ENCODE measurements at regions of chr13 and their contacts with region 1.

Region 1: GRCh38 chr13:104198801-104199200 is 1132.6 kb upstream of the SLC10A2 start:
- DNase-seq: no peak
- ATAC-seq: no peak
- H3K4me3 ChIP-seq: no peak overlapping the region
- H3K27ac ChIP-seq: no peak overlapping the region
- H3K4me1 ChIP-seq: no peaks in the 10 kb centered on the region
- H3K27me3 ChIP-seq: no peaks in the 10 kb centered on the region
- CTCF ChIP-seq: no peak
- POLR2A ChIP-seq: no peak

Region 2: GRCh38 chr13:104132849-104133248 is 66.0 kb before region 1 on chr13:
- intact Hi-C with region 1: no loop called
- DNase-seq: no peak
- ATAC-seq: no peak
- H3K4me3 ChIP-seq: no peak overlapping the region
- H3K27ac ChIP-seq: no peak overlapping the region
- H3K4me1 ChIP-seq: no peaks in the 10 kb centered on the region
- H3K27me3 ChIP-seq: no peaks in the 10 kb centered on the region
- CTCF ChIP-seq: no peak
- POLR2A ChIP-seq: no peak

Region 3: GRCh38 chr13:104143760-104144416 is 54.9 kb before region 1 on chr13:
- intact Hi-C with region 1: loop called in 1 of 10 experiments (anchors 5 kb)
- DNase-seq: no peak
- ATAC-seq: no peak
- H3K4me3 ChIP-seq: no peak overlapping the region
- H3K27ac ChIP-seq: no peak overlapping the region
- H3K4me1 ChIP-seq: no peaks in the 10 kb centered on the region
- H3K27me3 ChIP-seq: no peaks in the 10 kb centered on the region
- CTCF ChIP-seq: no peak
- POLR2A ChIP-seq: no peak